Naive thymus-derived CD8-positive, alpha-beta T cell (primary cell): ENCODE measurements at regions of chr2 and their contacts with region 1.

Region 1: GRCh38 chr2:218301176-218301819 is 9.0 kb upstream of the TMBIM1 start:
- DNase-seq: peak; percentile 65 to 93 (median 86)
- ATAC-seq: peak; percentile 92 to 99
- H3K4me3 Mint-ChIP-seq: no peak overlapping the region
- H3K27ac Mint-ChIP-seq: peak overlapping the region in 9 of 10 donors; percentile 2 to 92 (median 66)
- H3K4me1 Mint-ChIP-seq: peaks cover 6 to 11% (median 7%) of the 10 kb centered on the region in 4 donors
- H3K27me3 Mint-ChIP-seq: no peaks in the 10 kb centered on the region

Region 2: GRCh38 chr2:218257390-218257981 is 43.8 kb before region 1 on chr2:
- POLR2A ChIA-PET with region 1: no interaction called
- DNase-seq: peak in 9 of 10 donors; percentile 46 to 72 (median 61)
- ATAC-seq: peak; percentile 75 to 80
- H3K4me3 Mint-ChIP-seq: peak overlapping the region; percentile 3 to 69 (median 52)
- H3K27ac Mint-ChIP-seq: peak overlapping the region; percentile 35 to 95 (median 92)
- H3K4me1 Mint-ChIP-seq: peaks cover 13 to 35% (median 24%) of the 10 kb centered on the region in 4 donors
- H3K27me3 Mint-ChIP-seq: no peaks in the 10 kb centered on the region

Region 3: DNA sequence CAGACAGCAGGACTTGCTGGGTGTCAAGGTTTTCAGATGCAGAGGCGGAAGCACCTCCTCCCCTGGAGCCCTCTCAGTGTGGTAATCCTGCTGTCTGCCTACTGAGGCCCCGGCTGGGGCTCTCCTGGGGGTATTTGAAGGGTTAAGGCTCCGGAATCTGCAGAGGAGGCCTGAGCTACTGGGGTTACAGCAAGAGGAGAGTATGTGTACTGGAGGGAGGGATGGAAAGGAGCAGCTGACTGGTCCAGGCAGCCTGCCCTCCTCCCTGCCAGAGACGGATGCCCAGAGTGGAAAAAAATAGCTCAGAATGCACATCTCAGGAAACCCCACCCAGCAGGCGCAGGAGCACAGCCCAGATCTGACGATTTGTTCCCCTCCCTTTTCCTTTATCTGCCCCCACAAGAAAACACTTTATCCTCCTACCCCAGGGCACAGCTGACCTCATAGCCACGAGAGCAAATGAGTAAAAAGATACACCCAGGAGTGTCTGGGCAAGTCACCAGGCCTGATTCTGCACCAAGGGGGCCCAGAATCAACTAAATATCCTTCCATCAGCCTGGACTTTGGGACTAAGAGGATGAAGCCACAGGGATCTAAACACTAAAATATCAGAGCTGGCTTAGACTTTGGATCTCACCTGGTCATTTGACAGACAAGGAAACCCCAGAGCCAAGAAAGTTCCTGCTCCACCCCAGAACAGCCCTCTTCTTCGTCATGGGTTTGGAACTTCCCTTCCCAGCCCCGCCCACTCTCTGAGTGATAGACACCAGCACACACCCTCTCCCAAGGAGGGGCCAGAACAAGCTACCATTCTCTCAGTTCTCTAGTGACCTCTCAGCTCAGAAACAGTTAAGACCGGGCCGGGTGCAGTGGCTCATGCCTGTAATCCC is 14.5 kb before region 1 on chr2:
- POLR2A ChIA-PET with region 1: interaction called, 12 read pairs
- DNase-seq: peak; percentile 59 to 87 (median 79)
- ATAC-seq: peak; percentile 72 to 73
- H3K4me3 Mint-ChIP-seq: peak overlapping the region; percentile 90 to 99 (median 94)
- H3K27ac Mint-ChIP-seq: peak overlapping the region; percentile 97 to 100 (median 98)
- H3K4me1 Mint-ChIP-seq: peaks cover 49 to 94% (median 88%) of the 10 kb centered on the region in 4 donors
- H3K27me3 Mint-ChIP-seq: no peaks in the 10 kb centered on the region